Right cardiac atrium (tissue), 5 donors: ENCODE measurements at regions of chr3 and their contacts with region 1.

Region 1: GRCh38 chr3:136196401-136197158 is 445 bp upstream of the MSL2 start:
- DNase-seq: peak; percentile 99 to 100 (median 99)
- ATAC-seq: peak; percentile 94 to 95
- H3K4me3 ChIP-seq: peak overlapping the region; percentile 91
- H3K27ac ChIP-seq: peak overlapping the region; percentile 96
- H3K4me1 ChIP-seq: no peaks in the 10 kb centered on the region
- H3K27me3 ChIP-seq: no peaks in the 10 kb centered on the region

Region 2: GRCh38 chr3:136135039-136135802 is 61.4 kb before region 1 on chr3:
- intact Hi-C with region 1: loop called in 1 of 4 experiments (anchors 10 kb)
- DNase-seq: no peak
- ATAC-seq: peak; percentile 32 to 36
- H3K4me3 ChIP-seq: no peak overlapping the region
- H3K27ac ChIP-seq: no peak overlapping the region
- H3K4me1 ChIP-seq: no peaks in the 10 kb centered on the region
- H3K27me3 ChIP-seq: no peaks in the 10 kb centered on the region

Region 3: DNA sequence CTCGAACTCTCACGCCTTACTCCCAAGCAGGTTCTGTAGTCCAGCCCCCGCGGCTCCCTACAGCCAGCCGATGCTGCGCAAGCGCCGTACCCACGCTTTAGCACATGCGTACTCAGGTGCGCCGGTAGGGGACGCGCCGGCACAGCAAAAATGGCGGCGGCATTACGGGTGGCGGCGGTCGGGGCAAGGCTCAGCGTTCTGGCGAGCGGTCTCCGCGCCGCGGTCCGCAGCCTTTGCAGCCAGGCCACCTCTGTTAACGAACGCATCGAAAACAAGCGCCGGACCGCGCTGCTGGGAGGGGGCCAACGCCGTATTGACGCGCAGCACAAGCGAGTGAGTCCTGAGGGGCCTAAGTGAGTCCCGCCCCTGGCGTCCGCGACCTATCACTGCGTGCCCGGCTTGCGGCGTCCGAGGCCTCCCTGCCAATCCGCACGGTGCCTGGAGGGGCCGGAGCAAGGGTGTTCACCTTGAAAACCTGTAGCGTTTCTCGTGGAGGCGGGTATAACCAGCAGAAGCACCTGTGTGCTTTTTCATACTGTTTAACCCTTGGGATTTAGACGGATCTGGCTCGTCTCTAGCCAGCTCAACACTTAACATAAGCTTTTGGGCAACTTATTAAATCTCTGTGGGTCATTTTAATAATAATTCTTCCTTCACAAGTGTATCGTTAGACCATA is 53.8 kb after region 1 on chr3 and contains the start of gene PCCB:
- intact Hi-C with region 1: loop called in 2 of 4 experiments (anchors 5 to 10 kb)
- DNase-seq: peak; percentile 96 to 99 (median 97)
- ATAC-seq: peak; percentile 99
- H3K4me3 ChIP-seq: peak within 1 kb of the TSS; percentile 64
- H3K27ac ChIP-seq: peak within 1 kb of the TSS; percentile 98
- H3K4me1 ChIP-seq: no peaks in the 10 kb centered on the region
- H3K27me3 ChIP-seq: no peaks in the 10 kb centered on the region
- total RNA-seq, gene PCCB: 69.3 to 78.6 (median 75.2) TPM

Region 4: GRCh38 chr3:136385457-136385856 is 188.9 kb after region 1 on chr3:
- intact Hi-C with region 1: no loop called
- DNase-seq: no peak
- ATAC-seq: no peak
- H3K4me3 ChIP-seq: no peak overlapping the region
- H3K27ac ChIP-seq: no peak overlapping the region
- H3K4me1 ChIP-seq: no peaks in the 10 kb centered on the region
- H3K27me3 ChIP-seq: no peaks in the 10 kb centered on the region